Activated T-helper 1 cell treated with anti-CD3 and anti-CD28 coated beads, Interleukin-12 subunit alpha, Interleukin-12 subunit beta, Interleukin-2, Interleukin-4 antibody, amounts not matched to agents 30 ng/mL and 10 ng/mL and 1 ng/mL, durations not matched to agents 14 hours and 24 hours and 36 hours (primary cell): ENCODE measurements at regions of chr3 and their contacts with region 1.

Region 1: GRCh38 chr3:46372492-46373359 is 2.0 kb downstream of the CCR5 start:
- DNase-seq: peak; percentile 31
- H3K4me3 Mint-ChIP-seq: peak overlapping the region; percentile 58
- H3K27ac Mint-ChIP-seq: peak overlapping the region; percentile 22
- H3K4me1 Mint-ChIP-seq: peaks cover 84% of the 10 kb centered on the region
- H3K27me3 Mint-ChIP-seq: peaks cover 6% of the 10 kb centered on the region

Region 2: GRCh38 chr3:46078712-46079400 is 293.9 kb before region 1 on chr3:
- intact Hi-C with region 1: loop called (anchors 1 kb)
- DNase-seq: peak; percentile 82
- H3K4me3 Mint-ChIP-seq: no peak overlapping the region
- H3K27ac Mint-ChIP-seq: no peak overlapping the region
- H3K4me1 Mint-ChIP-seq: peaks cover 74% of the 10 kb centered on the region
- H3K27me3 Mint-ChIP-seq: peaks cover 7% of the 10 kb centered on the region

Region 3: DNA sequence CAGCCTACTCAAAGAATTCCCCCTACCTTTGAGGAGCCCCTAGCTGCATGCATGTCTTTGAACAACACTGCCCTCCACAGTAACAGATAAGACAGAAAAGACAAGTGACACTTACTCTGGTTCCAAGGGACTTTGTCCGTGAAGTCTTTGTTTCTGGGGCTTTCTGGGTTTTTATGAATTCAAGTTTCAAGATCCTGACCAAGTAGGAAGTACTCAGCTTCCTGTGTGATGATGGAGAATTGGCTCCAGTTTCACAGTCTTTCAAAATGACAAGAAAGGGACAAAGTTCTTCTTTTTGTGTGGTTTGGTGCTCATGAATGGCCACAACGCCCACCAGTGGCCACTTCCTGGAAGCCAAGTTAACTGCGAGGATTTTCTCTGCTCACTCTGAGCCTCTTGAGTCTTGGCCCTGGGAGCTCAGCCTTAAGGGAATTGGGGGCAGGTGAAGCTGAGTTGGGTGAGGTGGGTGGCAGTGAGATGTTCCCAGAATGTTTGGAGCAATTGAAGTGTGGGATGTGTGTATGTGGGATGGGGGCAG is 164.5 kb before region 1 on chr3 and contains the start of gene CCR1:
- intact Hi-C with region 1: loop called (anchors 1 kb)
- DNase-seq: peak; percentile 58
- H3K4me3 Mint-ChIP-seq: peak within 1 kb of the TSS; percentile 78
- H3K27ac Mint-ChIP-seq: peak within 1 kb of the TSS; percentile 91
- H3K4me1 Mint-ChIP-seq: peaks cover 70% of the 10 kb centered on the region
- H3K27me3 Mint-ChIP-seq: no peaks in the 10 kb centered on the region
- total RNA-seq, gene CCR1: 22.6 and 23.2 TPM in 2 replicates

Region 4: DNA sequence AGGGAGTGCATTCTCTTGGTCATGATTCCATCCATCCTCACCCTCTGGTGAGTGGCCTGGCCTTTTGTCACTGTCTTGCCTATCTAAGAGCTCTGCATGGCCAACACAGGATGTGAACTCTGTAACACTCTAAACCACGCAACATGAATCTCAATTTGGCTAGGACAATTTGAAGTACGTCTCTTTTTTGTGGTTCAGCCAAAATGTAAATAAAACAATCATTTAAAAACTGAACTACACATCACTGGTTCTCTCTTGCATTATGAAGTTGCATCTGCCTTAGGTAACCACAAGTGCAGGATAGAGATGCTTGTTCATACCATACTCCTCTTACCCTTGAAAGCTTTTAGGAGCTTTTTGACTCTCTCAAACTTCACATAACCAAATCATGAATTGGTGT is 103.2 kb before region 1 on chr3:
- intact Hi-C with region 1: loop called (anchors 1 kb)
- DNase-seq: peak; percentile 16
- H3K4me3 Mint-ChIP-seq: peak overlapping the region; percentile 12
- H3K27ac Mint-ChIP-seq: peak overlapping the region; percentile 63
- H3K4me1 Mint-ChIP-seq: peaks cover 70% of the 10 kb centered on the region
- H3K27me3 Mint-ChIP-seq: peaks cover 16% of the 10 kb centered on the region

Region 5: GRCh38 chr3:46349485-46350261 is 23.1 kb before region 1 on chr3:
- intact Hi-C with region 1: loop called (anchors 1 kb)
- DNase-seq: no peak
- H3K4me3 Mint-ChIP-seq: peak overlapping the region; percentile 54
- H3K27ac Mint-ChIP-seq: peak overlapping the region; percentile 88
- H3K4me1 Mint-ChIP-seq: peaks cover 72% of the 10 kb centered on the region
- H3K27me3 Mint-ChIP-seq: peaks cover 7% of the 10 kb centered on the region

Region 6: GRCh38 chr3:46670620-46671427 is 298.1 kb after region 1 on chr3:
- intact Hi-C with region 1: no loop called
- DNase-seq: no peak
- H3K4me3 Mint-ChIP-seq: no peak overlapping the region
- H3K27ac Mint-ChIP-seq: no peak overlapping the region
- H3K4me1 Mint-ChIP-seq: no peaks in the 10 kb centered on the region
- H3K27me3 Mint-ChIP-seq: no peaks in the 10 kb centered on the region